ENCODE measurements at regions of chr11 and their contacts with region 1.

Region 1: DNA sequence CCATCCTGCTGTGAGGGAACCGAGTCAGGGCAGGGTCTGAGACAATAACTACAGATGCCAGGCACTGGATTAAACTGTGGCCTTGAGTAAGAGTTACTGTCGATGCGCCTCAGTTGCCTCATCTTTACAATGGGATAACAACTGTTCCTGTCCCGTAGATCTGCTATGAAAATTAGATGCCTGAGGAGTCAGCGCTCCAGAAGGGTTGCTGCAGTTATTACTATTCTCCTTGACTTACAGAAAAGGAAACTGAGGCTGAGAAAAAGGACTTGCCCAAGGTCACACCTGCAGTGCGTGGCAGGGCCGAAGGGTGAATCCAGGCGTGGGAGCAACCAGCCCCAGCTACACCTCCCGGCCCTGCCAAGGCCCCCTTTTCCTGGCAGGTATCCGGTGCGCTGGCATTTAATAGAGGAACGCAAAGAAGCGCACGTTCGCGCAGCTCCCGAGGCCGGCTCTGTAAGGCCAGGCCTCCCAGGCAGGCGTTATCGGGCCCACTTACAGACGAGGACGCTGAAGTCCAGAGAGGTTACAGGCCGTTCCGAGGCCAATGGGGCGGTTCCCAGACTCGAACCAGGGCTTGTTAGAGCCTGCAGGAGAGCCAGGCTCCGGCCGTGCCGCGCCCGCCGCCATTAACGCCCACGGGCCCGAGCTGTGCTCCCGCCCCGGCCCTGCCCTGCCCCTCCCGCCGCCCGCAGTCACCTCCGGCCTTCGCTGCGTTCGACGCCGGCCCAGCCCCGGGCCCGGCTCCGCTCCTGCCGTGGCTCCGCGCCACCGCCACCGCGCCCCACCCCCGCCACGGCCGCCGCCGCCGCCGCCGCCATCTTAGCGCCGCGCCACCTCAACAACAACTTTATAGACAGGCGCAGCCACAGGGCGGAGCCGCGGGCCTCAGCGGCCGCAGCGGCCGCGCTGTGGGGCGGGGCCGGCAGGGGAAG is at the start of gene C11orf68:
- DNase-seq: no peak
- ATAC-seq: peak; percentile 45
- H3K4me3 ChIP-seq: peak within 1 kb of the TSS; percentile 91 to 97
- H3K27ac ChIP-seq: peak within 1 kb of the TSS; percentile 99
- H3K4me1 ChIP-seq: peaks cover 60% of the 10 kb centered on the region
- H3K27me3 ChIP-seq: no peaks in the 10 kb centered on the region
- CTCF ChIP-seq: no peak
- total RNA-seq, gene C11orf68: 84.7 TPM

Region 2: GRCh38 chr11:65900125-65900898 is 18.2 kb before region 1 on chr11 and contains the start of gene FOSL1:
- CTCF ChIA-PET with region 1: interaction called, 10 read pairs
- POLR2A ChIA-PET with region 1: interaction called, 35 read pairs
- in situ Hi-C with region 1: no loop called
- intact Hi-C with region 1: no loop called
- DNase-seq: no peak
- ATAC-seq: peak; percentile 69
- H3K4me3 ChIP-seq: peak within 1 kb of the TSS; percentile 82 to 89
- H3K27ac ChIP-seq: peak within 1 kb of the TSS; percentile 99
- H3K4me1 ChIP-seq: peaks cover 58% of the 10 kb centered on the region
- H3K27me3 ChIP-seq: no peaks in the 10 kb centered on the region
- CTCF ChIP-seq: no peak
- total RNA-seq, gene FOSL1: 186 TPM

Region 3: DNA sequence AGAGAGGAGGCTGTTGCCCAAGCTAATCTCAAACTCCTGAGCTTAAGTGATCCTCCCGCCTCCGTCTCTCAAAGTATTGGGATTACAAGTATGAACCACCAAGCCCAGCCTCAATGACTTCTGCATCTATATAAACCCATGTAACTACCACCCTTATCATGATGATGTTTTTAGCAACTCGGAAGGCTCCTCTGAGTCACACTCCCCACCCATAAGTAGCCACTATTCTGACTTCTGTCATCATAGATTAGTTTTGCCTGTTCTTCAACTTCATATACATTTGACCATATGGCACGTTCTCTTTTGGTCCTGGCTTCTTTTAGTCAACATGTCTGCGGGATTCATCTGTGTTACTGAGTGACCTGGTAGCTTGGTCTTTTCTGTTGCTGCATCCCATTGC is 11.9 kb before region 1 on chr11:
- CTCF ChIA-PET with region 1: no interaction called
- POLR2A ChIA-PET with region 1: interaction called, 35 read pairs
- in situ Hi-C with region 1: no loop called
- intact Hi-C with region 1: no loop called
- DNase-seq: no peak
- ATAC-seq: no peak
- H3K4me3 ChIP-seq: no peak overlapping the region
- H3K27ac ChIP-seq: peak overlapping the region; percentile 99
- H3K4me1 ChIP-seq: peaks cover 80% of the 10 kb centered on the region
- H3K27me3 ChIP-seq: no peaks in the 10 kb centered on the region
- CTCF ChIP-seq: no peak